Common myeloid progenitor, CD34-positive (primary cell): ENCODE measurements at regions of chr5 and their contacts with region 1.

Region 1: GRCh38 chr5:160467555-160468362 is 46.1 kb downstream of the PTTG1 start:
- DNase-seq: peak; percentile 97 to 100 (median 99)
- H3K4me3 ChIP-seq: peak overlapping the region; percentile 15 to 97 (median 77)
- H3K27ac ChIP-seq: peak overlapping the region; percentile 93 to 94
- H3K4me1 ChIP-seq: peaks cover 39 to 84% (median 72%) of the 10 kb centered on the region in 4 experiments
- H3K27me3 ChIP-seq: no peaks in the 10 kb centered on the region

Region 2: GRCh38 chr5:160479926-160480325 is 12.2 kb after region 1 on chr5:
- CTCF ChIA-PET with region 1: interaction called, 9 read pairs
- POLR2A ChIA-PET with region 1: interaction called, 14 read pairs
- DNase-seq: peak in 1 of 3 donors; percentile 24
- H3K4me3 ChIP-seq: no peak overlapping the region
- H3K27ac ChIP-seq: no peak overlapping the region
- H3K4me1 ChIP-seq: peaks cover 4 to 44% (median 26%) of the 10 kb centered on the region in 4 experiments
- H3K27me3 ChIP-seq: no peaks in the 10 kb centered on the region

Region 3: GRCh38 chr5:160493806-160494338 is 26.1 kb after region 1 on chr5:
- CTCF ChIA-PET with region 1: interaction called, 12 read pairs
- POLR2A ChIA-PET with region 1: interaction called, 10 read pairs
- DNase-seq: peak; percentile 87 to 98 (median 96)
- H3K4me3 ChIP-seq: peak overlapping the region in 2 of 7 experiments; percentile 4 to 38
- H3K27ac ChIP-seq: peak overlapping the region; percentile 27 to 72
- H3K4me1 ChIP-seq: peaks cover 14 to 52% (median 33%) of the 10 kb centered on the region in 4 experiments
- H3K27me3 ChIP-seq: no peaks in the 10 kb centered on the region

Region 4: DNA sequence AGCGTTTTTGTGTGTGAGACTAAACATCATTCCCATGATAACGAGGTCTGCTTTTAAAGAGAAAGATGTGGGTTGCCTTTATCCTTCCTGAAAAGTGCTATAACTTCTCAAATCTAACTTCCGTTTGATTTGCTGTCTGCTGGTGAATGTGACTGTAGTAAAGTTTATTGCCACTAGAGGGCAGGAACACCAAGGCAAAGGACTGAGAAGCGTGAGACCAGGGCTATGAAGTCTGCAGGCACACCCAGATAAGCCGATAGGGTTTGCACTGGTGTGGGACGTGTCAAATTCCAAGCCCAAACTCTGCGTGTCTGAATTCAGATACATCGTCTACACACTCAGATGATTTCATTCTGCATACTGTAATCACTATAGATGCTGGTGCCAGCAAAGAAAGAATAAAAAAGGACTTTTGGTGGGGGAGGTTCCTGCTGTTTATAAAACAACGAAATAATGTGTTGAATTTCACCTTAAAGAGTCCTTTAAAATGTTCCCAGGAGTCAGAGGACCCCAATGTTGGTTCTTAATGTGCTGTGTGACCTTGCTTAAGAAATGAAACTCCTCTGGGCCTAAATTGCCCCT is 41.1 kb after region 1 on chr5:
- CTCF ChIA-PET with region 1: interaction called, 28 read pairs
- POLR2A ChIA-PET with region 1: interaction called, 14 read pairs
- DNase-seq: peak; percentile 90 to 94 (median 91)
- H3K4me3 ChIP-seq: peak overlapping the region in 1 of 7 experiments; percentile 30
- H3K27ac ChIP-seq: no peak overlapping the region
- H3K4me1 ChIP-seq: peaks cover 6 to 39% (median 30%) of the 10 kb centered on the region in 4 experiments
- H3K27me3 ChIP-seq: peaks cover 0 to 4% (median 0%) of the 10 kb centered on the region in 5 experiments

Region 5: GRCh38 chr5:160537940-160538339 is 70.2 kb after region 1 on chr5:
- CTCF ChIA-PET with region 1: no interaction called
- POLR2A ChIA-PET with region 1: no interaction called
- DNase-seq: no peak
- H3K4me3 ChIP-seq: no peak overlapping the region
- H3K27ac ChIP-seq: no peak overlapping the region
- H3K4me1 ChIP-seq: no peaks in the 10 kb centered on the region
- H3K27me3 ChIP-seq: peaks cover 0 to 2% (median 0%) of the 10 kb centered on the region in 5 experiments